ENCODE measurements at regions of chr1 and their contacts with region 1.

Region 1: GRCh38 chr1:209989525-209989924 is 51.5 kb downstream of the SYT14 start:
- DNase-seq: no peak
- H3K4me3 ChIP-seq: no peak overlapping the region
- H3K27ac ChIP-seq: no peak overlapping the region
- H3K4me1 ChIP-seq: no peaks in the 10 kb centered on the region
- H3K27me3 ChIP-seq: no peaks in the 10 kb centered on the region
- CTCF ChIP-seq: peak in 1 of 5 experiments; percentile 23
- EP300 ChIP-seq: no peak
- POLR2A ChIP-seq: no peak

Region 2: DNA sequence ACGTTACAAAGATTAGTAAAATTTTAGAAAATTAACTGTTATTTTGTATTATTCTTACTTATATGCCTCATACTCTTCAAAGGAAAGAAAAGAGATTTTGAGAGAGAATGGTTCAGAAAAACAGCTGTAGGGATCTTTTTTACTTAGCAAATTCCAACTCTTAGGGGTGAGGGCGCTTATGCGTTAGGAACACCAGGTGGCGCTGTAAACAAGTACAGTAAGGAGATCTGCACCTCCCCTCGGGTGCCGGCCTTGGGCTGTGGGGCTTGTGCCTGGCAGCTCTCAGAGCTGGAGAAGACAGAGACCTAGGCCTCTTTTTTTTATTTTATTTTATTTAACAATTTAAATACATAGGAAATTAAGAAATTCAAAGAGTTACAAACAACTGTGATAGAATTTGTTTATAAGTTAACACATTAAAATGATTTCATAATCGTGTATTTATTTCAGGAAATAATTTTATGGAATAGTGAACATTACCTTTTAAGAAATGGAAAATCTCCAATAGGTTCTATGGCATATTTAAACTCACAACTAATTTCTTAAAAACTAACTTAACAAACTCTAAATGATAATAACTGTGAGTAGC is 129.1 kb before region 1 on chr1:
- in situ Hi-C with region 1: loop called in 1 of 4 experiments (anchors 25 kb)
- intact Hi-C with region 1: loop called (anchors 10 kb)
- DNase-seq: peak; percentile 73
- H3K4me3 ChIP-seq: no peak overlapping the region
- H3K27ac ChIP-seq: no peak overlapping the region
- H3K4me1 ChIP-seq: no peaks in the 10 kb centered on the region
- H3K27me3 ChIP-seq: peaks cover 17% of the 10 kb centered on the region
- CTCF ChIP-seq: peak; percentile 65 to 91 (median 86)
- EP300 ChIP-seq: no peak
- POLR2A ChIP-seq: no peak